Activated T-helper 2 cell treated with anti-CD3 and anti-CD28 coated beads, Interferon-gamma antibody, Interleukin-2, Interleukin-4, amounts not matched to agents 10 μg/mL and 5 μg/mL and 100 μg/mL, durations not matched to agents 14 hours and 24 hours and 36 hours (primary cell): ENCODE measurements at regions of chr3 and their contacts with region 1.

Region 1: GRCh38 chr3:151305101-151305750 is 11.4 kb downstream of the GPR87 start:
- DNase-seq: no peak
- H3K4me3 Mint-ChIP-seq: no peak overlapping the region
- H3K27ac Mint-ChIP-seq: peak overlapping the region; percentile 88
- H3K4me1 Mint-ChIP-seq: peaks cover 85% of the 10 kb centered on the region
- H3K27me3 Mint-ChIP-seq: no peaks in the 10 kb centered on the region

Region 2: DNA sequence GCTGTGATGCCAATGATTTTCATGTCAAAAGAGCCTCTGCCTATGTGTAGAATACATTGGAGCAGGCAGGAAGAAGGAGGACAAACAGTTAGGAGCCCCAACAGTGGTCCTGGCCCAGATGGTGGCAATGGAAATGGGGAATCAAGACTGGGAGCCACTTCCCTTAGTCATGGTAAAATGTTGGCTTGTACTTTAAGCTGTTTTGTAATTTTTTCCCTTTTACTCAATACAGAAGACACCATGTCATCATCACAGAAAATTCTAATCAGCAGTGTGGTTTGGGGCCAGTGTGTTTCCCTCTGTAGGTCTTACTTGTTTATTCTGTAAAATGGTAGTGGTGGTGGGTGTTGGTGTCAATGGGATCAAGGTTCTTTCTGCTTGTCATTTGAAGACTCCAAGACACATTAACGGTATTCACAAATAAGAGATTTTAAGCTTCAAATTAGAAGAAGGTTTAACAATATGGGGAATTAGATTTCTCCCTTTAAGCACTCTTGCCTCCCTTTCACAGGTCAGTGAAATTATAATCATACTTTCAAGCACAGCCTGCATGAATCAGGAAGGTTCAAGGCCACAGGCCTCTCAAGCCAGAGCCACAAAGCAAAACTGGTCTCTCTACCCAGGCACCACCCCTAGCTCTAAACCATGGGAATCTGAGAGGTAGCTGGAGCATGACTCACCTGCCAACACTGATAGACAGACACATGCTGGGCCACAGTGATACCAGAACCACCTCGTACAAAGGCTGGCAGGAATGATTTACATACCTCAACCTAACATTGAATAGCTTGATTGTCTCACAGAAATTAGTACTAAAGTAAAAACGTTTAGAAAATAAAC is 567.1 kb before region 1 on chr3:
- intact Hi-C with region 1: loop called (anchors 1 kb)
- DNase-seq: no peak
- H3K4me3 Mint-ChIP-seq: peak overlapping the region; percentile 53
- H3K27ac Mint-ChIP-seq: peak overlapping the region; percentile 100
- H3K4me1 Mint-ChIP-seq: peaks cover 91% of the 10 kb centered on the region
- H3K27me3 Mint-ChIP-seq: no peaks in the 10 kb centered on the region

Region 3: GRCh38 chr3:150751753-150752263 is 553.4 kb before region 1 on chr3:
- intact Hi-C with region 1: no loop called
- DNase-seq: no peak
- H3K4me3 Mint-ChIP-seq: no peak overlapping the region
- H3K27ac Mint-ChIP-seq: peak overlapping the region; percentile 79
- H3K4me1 Mint-ChIP-seq: peaks cover 75% of the 10 kb centered on the region
- H3K27me3 Mint-ChIP-seq: no peaks in the 10 kb centered on the region

Region 4: GRCh38 chr3:151203051-151203420 is 102.2 kb before region 1 on chr3 and contains the start of gene GPR171:
- intact Hi-C with region 1: loop called (anchors 1 kb)
- DNase-seq: peak; percentile 70
- H3K4me3 Mint-ChIP-seq: peak within 1 kb of the TSS; percentile 91
- H3K27ac Mint-ChIP-seq: peak within 1 kb of the TSS; percentile 95
- H3K4me1 Mint-ChIP-seq: peaks cover 52% of the 10 kb centered on the region
- H3K27me3 Mint-ChIP-seq: no peaks in the 10 kb centered on the region
- total RNA-seq, gene GPR171: 232 TPM in 2 replicates

Region 5: DNA sequence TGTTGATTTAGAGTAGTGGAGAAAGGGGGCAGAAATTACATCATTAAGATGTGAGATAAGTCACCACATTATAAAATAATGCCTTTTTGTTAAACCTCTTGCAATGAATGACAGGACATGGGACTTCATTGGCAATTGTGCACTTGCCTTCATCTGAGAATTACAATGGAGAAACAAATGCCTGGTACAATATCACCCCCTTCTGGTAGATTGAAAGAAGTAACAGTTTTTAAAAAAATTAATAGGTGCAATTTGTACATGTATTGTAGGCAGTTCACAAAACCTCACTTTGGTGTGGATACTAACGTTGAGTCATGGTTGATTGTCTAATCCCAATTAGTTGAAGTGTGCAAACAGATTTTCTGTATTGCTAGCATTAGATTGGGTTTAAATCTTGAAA is 22.3 kb before region 1 on chr3:
- intact Hi-C with region 1: loop called (anchors 1 kb)
- DNase-seq: no peak
- H3K4me3 Mint-ChIP-seq: no peak overlapping the region
- H3K27ac Mint-ChIP-seq: peak overlapping the region; percentile 19
- H3K4me1 Mint-ChIP-seq: peaks cover 47% of the 10 kb centered on the region
- H3K27me3 Mint-ChIP-seq: no peaks in the 10 kb centered on the region

Region 6: GRCh38 chr3:151871639-151872468 is 566.6 kb after region 1 on chr3:
- intact Hi-C with region 1: loop called (anchors 10 kb)
- DNase-seq: no peak
- H3K4me3 Mint-ChIP-seq: peak overlapping the region; percentile 26
- H3K27ac Mint-ChIP-seq: peak overlapping the region; percentile 12
- H3K4me1 Mint-ChIP-seq: peaks cover 23% of the 10 kb centered on the region
- H3K27me3 Mint-ChIP-seq: peaks cover 13% of the 10 kb centered on the region

Region 7: DNA sequence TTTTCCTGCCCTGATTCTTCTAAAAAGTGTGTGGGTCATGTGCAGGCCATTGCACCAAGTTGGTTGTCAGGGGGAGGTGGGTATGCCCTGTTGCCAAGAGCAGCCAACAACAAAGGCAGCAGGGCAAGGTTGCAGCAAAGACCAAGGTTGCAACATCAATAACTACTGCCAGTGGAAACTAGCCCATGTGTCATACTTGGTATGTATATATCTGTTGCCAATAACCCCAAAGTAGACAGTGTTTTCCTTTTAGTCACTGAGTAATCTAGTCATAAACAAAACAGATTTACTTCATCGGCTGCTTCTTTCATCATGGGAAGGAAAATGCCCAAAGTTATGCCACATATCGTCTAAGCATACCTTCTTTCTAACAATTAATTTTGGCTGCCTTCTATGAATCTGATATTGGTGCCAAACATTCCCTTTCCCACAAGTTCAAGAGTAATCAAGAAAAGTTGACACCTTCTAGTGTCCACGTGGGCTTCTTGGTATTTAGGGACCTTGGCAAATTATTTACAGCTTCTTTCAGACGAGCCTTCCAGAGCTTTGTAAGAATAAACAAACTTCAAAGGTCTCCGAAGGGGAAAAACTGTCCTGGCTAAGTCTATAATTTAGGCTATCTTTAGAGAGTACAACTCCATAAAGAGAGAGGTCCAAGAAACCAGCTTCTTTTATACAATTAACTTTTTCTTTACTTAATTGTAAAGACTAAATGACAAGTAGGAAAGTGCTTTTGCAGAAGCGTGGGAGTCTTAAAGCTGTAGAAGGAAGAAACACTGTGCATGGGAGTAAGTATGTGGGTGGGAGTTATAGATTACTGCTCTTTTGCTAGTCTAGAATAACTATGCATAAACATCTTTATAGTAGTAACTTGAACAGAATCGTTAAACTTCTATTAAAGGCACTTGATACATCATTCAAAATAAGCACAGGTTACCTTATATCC is 953.5 kb after region 1 on chr3:
- intact Hi-C with region 1: loop called (anchors 5 kb)
- DNase-seq: peak; percentile 49
- H3K4me3 Mint-ChIP-seq: peak overlapping the region; percentile 74
- H3K27ac Mint-ChIP-seq: peak overlapping the region; percentile 97
- H3K4me1 Mint-ChIP-seq: peaks cover 78% of the 10 kb centered on the region
- H3K27me3 Mint-ChIP-seq: no peaks in the 10 kb centered on the region